Left ventricle myocardium superior (tissue), 1 donor: ENCODE measurements at regions of chr7 and their contacts with region 1.

Region 1: GRCh38 chr7:50679218-50680007 is 103.3 kb downstream of the GRB10 start:
- DNase-seq: no peak
- ATAC-seq: peak; percentile 78

Region 2: GRCh38 chr7:50467817-50468610 is 211.4 kb before region 1 on chr7:
- intact Hi-C with region 1: loop called (anchors 5 kb)
- DNase-seq: peak; percentile 88
- ATAC-seq: peak; percentile 96

Region 3: GRCh38 chr7:50560865-50561351 is 118.5 kb before region 1 on chr7:
- intact Hi-C with region 1: no loop called
- DNase-seq: no peak
- ATAC-seq: no peak

Region 4: GRCh38 chr7:50751146-50751545 is 71.7 kb after region 1 on chr7:
- intact Hi-C with region 1: no loop called
- DNase-seq: no peak
- ATAC-seq: no peak

Region 5: DNA sequence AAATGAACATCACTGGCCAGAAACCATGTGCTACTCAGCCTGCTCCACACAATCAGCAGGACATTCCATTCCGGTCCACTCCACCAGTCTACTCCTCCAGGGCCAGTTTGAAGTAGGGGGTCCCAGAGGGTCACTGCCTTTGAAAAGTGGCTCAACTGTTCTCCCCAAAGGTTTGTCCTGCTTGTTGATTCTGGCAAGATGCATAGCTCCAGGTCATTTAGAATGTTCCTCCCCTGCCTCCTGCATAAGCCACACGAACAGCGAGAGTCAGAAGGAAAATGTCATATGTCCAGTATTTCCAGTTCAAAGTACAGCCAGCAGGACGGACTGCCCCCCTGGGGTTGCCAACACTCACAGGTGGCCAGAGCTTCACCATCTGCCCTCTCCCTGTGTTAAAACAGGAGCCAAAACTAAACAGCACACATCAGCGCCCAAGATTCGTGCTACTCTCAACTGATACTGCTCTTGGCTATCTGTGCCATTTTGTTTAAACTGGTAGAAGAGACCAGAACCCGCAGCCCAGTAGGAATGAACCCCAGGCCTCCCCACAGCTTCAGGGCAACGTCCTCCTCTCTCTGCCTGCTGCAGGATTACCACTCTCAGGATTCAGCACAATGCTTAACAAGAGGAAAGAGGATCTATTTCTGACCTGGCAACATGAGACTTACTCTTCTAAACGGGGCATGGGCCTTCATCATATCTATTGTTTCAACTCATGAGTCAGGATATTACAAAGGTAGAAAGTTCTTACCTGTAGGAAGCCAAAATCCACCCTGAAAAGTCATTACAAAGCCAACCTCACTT is 92.0 kb after region 1 on chr7:
- intact Hi-C with region 1: no loop called
- DNase-seq: no peak
- ATAC-seq: peak; percentile 72

Region 6: GRCh38 chr7:51067757-51068156 is 388.3 kb after region 1 on chr7:
- intact Hi-C with region 1: loop called (anchors 10 kb)
- DNase-seq: peak; percentile 45
- ATAC-seq: peak; percentile 60